ENCODE measurements at regions of chr15 and their contacts with region 1.

Region 1: GRCh38 chr15:82849556-82850512 is 40.4 kb downstream of the WHAMM start:
- DNase-seq: peak; percentile 62 to 73 (median 67)
- H3K4me3 ChIP-seq: peak overlapping the region; percentile 9
- H3K27ac ChIP-seq: no peak overlapping the region
- H3K4me1 ChIP-seq: no peaks in the 10 kb centered on the region
- H3K27me3 ChIP-seq: no peaks in the 10 kb centered on the region
- CTCF ChIP-seq: peak; percentile 20 to 52 (median 36)
- EP300 ChIP-seq: no peak
- POLR2A ChIP-seq: no peak

Region 2: DNA sequence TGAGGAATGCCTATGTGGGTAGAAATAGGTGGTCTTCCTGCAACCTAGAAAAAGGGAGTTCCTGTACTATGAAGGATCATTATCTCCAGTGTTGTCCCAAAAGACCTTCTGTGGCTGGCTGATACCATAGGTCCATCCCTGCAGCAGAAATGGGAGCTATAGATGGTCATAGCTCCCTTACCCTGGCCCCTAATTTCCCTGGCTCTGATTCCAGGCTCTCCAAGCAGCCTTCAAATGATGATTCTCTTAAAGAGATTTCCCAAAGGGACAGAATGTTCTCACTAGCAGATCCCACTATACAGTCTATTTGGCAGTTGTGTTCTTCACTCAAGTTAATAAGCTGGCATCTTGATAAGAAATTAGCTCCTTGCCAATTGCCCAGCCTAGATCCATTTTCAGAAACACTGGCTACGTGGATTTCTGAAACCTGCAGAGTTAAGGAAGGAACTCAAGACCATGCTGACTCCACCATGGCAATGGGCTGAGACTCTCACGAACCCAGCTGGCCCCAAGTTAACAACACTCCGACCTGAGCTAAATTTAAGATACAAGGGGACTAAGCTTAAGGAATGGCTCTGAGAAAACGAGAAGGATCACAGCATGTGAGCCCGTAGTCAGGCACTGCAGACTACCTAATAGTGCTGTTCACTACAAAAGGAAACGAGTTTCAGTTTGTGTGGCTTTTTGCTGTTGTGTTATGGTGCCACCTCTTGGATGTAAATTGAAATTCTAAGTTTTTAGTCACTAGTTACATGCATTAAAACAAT is 150.3 kb after region 1 on chr15:
- intact Hi-C with region 1: loop called in 1 of 4 experiments (anchors 10 kb)
- DNase-seq: no peak
- H3K4me3 ChIP-seq: no peak overlapping the region
- H3K27ac ChIP-seq: no peak overlapping the region
- H3K4me1 ChIP-seq: no peaks in the 10 kb centered on the region
- H3K27me3 ChIP-seq: no peaks in the 10 kb centered on the region
- CTCF ChIP-seq: peak in 1 of 3 donors; percentile 38
- EP300 ChIP-seq: no peak
- POLR2A ChIP-seq: no peak

Measured in ovary (tissue), 10 donors.